Activated CD4-positive, alpha-beta T cell treated with anti-CD3 and anti-CD28 coated beads for 36 hours (primary cell): ENCODE measurements at regions of chr4 and their contacts with region 1.

Region 1: DNA sequence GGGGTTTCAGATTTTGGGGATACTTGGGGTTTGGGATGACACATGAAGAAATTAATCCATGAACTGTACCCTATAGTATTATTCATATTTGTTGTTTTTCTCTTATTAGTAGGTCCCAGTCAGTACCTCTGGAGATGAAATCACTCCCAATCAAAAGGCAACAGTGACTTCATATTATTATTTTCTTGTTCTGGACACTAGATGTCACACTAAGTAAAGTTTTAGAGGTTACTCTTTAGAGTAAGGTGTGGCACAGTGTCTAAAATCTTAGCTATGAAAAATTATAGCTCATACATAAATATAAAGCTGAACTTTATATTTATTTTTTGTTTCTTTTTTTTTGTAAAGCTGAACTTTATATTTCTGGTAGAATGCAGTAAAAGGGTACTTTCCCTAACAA is 35.1 kb downstream of the FAM114A1 start:
- DNase-seq: no peak
- ATAC-seq: peak; percentile 88
- H3K4me3 Mint-ChIP-seq: no peak overlapping the region
- H3K27ac Mint-ChIP-seq: no peak overlapping the region
- H3K4me1 Mint-ChIP-seq: peaks cover 3% of the 10 kb centered on the region
- H3K27me3 Mint-ChIP-seq: no peaks in the 10 kb centered on the region

Region 2: DNA sequence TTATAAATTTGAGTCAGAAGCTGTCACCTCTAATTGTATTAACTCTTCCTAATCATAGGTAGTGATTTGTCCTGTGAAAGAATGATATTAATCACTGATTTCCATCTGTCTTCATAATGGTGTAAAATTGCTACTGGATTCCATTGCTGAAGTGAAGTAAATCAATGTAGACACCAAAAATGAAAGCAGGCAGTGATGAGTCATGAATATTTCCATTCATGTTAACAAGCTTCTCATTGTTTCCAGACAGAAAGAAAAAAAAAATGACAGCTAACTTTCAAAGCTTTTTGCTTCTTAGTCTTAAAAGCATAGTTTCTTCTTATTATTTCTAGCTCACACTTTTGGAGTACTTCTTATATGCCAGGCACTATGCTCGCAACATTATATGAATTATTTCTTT is 13.6 kb before region 1 on chr4:
- CTCF ChIA-PET with region 1: interaction called, 16 read pairs
- POLR2A ChIA-PET with region 1: no interaction called
- intact Hi-C with region 1: no loop called
- DNase-seq: no peak
- ATAC-seq: peak; percentile 78
- H3K4me3 Mint-ChIP-seq: peak overlapping the region; percentile 52
- H3K27ac Mint-ChIP-seq: peak overlapping the region; percentile 88
- H3K4me1 Mint-ChIP-seq: peaks cover 18% of the 10 kb centered on the region
- H3K27me3 Mint-ChIP-seq: no peaks in the 10 kb centered on the region

Region 3: DNA sequence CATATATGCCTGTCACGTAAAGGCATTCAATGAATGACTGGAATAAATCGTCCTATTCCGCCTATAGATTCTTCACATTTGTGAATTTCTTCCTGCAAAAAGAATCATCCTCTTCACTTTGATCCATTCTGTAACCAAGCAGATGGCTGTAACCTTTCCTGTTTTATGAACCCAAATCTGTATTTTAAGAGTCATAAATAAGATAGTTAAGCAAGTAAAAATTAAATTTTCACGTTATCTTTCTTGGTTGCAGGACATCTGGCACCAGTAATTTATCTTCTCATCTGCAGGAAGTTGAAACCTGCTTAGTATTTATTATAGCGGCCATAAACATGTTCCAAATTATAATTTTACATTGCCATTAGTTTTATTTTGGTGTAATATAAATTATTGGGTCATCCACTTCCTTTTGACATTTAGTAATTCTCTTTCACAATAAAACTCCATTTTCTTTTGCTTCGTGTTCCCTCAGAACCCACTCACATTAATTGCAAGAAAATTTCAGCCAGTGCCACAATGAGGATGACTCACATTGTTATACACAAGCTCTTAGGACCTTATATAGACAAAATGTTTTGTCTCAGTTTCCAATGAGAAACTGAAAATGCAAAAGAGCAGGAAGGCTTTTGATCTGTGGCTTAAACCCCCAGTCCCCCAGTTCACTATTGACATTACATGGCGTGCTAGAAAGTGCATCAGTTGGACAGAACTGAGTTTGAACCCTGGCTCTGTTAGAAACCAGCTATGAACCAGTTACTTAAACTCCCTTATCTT is 78.4 kb after region 1 on chr4:
- CTCF ChIA-PET with region 1: interaction called, 18 read pairs
- POLR2A ChIA-PET with region 1: no interaction called
- intact Hi-C with region 1: loop called in 1 of 2 experiments (anchors 5 kb)
- DNase-seq: peak; percentile 30
- ATAC-seq: peak; percentile 81
- H3K4me3 Mint-ChIP-seq: peak overlapping the region; percentile 23
- H3K27ac Mint-ChIP-seq: peak overlapping the region; percentile 84
- H3K4me1 Mint-ChIP-seq: peaks cover 62% of the 10 kb centered on the region
- H3K27me3 Mint-ChIP-seq: no peaks in the 10 kb centered on the region

Region 4: DNA sequence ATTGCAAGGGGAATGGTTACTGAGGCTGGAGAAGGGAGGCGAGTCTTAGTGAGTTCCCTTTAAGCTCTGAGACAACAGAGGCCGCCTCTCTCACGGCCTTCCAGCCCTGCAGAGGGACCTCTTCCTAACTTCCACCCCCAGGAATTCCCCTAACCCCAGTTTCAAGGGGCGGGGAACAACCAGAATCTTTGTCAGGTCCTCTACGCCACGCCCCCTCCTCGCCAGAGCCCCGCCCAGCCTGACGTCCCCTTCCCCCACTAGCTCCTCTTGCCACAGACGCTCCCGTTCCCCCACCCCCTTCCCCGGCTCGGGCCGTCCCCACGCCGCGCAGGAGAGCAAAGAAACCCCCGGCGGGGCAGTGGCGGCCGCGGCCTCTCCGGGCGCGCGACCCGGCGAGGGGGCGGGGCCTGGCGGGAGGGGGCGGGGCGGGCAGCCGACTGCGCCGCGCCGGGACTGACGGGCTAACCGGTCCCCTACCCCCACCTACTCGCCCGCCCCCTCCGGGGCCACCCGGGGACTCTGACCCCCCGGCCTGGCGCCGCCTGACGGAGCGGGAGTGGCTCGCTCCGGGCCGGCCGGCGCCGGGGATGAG is 141.8 kb after region 1 on chr4:
- CTCF ChIA-PET with region 1: interaction called, 5 read pairs
- POLR2A ChIA-PET with region 1: interaction called, 5 read pairs
- intact Hi-C with region 1: loop called in 1 of 2 experiments (anchors 5 kb)
- DNase-seq: peak; percentile 99
- ATAC-seq: peak; percentile 87
- H3K4me3 Mint-ChIP-seq: peak overlapping the region; percentile 76
- H3K27ac Mint-ChIP-seq: peak overlapping the region; percentile 69
- H3K4me1 Mint-ChIP-seq: peaks cover 48% of the 10 kb centered on the region
- H3K27me3 Mint-ChIP-seq: no peaks in the 10 kb centered on the region

Region 5: GRCh38 chr4:39083164-39083563 is 180.5 kb after region 1 on chr4:
- CTCF ChIA-PET with region 1: interaction called, 11 read pairs
- POLR2A ChIA-PET with region 1: no interaction called
- intact Hi-C with region 1: no loop called
- DNase-seq: no peak
- ATAC-seq: no peak
- H3K4me3 Mint-ChIP-seq: no peak overlapping the region
- H3K27ac Mint-ChIP-seq: no peak overlapping the region
- H3K4me1 Mint-ChIP-seq: no peaks in the 10 kb centered on the region
- H3K27me3 Mint-ChIP-seq: no peaks in the 10 kb centered on the region

Region 6: DNA sequence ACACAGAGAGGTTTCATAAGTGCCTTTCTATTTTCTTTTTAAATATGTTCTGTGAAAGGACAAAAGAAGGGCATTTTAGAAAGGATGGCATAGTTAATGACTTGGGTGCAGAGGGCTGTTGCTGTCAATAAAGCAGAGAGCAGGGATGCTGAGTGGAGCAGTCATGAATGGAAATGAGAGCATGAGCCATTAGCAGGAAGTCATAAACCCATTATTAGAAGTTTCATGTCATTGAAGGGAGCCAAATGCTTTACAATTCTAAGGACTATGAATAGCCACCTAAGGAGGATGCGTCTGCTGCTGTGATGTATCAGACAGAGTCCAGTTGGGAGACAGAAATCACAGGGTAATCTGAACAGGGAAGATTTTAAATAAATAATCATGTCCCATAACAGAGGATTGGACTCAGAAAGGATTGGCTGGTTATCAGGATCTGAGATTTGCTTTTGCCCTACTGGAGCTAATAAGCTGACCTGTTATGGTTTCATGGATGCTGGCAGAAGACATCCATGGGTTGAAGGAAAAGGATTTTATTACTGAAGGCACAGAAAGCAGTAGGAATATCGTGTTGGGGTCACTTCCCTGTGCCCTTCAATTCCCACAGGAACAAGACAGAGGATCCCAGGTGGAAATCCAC is 232.1 kb after region 1 on chr4:
- CTCF ChIA-PET with region 1: interaction called, 121 read pairs
- POLR2A ChIA-PET with region 1: interaction called, 3 read pairs
- intact Hi-C with region 1: loop called (anchors 1 kb)
- DNase-seq: no peak
- ATAC-seq: no peak
- H3K4me3 Mint-ChIP-seq: no peak overlapping the region
- H3K27ac Mint-ChIP-seq: no peak overlapping the region
- H3K4me1 Mint-ChIP-seq: peaks cover 9% of the 10 kb centered on the region
- H3K27me3 Mint-ChIP-seq: no peaks in the 10 kb centered on the region

Region 7: DNA sequence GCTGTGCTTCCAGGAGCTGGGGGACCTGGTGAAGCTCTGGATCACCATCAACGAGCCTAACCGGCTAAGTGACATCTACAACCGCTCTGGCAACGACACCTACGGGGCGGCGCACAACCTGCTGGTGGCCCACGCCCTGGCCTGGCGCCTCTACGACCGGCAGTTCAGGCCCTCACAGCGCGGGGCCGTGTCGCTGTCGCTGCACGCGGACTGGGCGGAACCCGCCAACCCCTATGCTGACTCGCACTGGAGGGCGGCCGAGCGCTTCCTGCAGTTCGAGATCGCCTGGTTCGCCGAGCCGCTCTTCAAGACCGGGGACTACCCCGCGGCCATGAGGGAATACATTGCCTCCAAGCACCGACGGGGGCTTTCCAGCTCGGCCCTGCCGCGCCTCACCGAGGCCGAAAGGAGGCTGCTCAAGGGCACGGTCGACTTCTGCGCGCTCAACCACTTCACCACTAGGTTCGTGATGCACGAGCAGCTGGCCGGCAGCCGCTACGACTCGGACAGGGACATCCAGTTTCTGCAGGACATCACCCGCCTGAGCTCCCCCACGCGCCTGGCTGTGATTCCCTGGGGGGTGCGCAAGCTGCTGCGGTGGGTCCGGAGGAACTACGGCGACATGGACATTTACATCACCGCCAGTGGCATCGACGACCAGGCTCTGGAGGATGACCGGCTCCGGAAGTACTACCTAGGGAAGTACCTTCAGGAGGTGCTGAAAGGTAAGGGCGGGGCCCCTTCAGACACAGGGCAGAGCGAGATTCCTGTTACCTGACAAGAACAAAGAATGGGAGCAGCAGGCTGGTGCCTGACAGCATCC is 544.3 kb after region 1 on chr4:
- CTCF ChIA-PET with region 1: no interaction called
- POLR2A ChIA-PET with region 1: no interaction called
- intact Hi-C with region 1: loop called in 1 of 2 experiments (anchors 10 kb)
- DNase-seq: peak; percentile 76
- ATAC-seq: peak; percentile 81
- H3K4me3 Mint-ChIP-seq: peak overlapping the region; percentile 21
- H3K27ac Mint-ChIP-seq: no peak overlapping the region
- H3K4me1 Mint-ChIP-seq: peaks cover 25% of the 10 kb centered on the region
- H3K27me3 Mint-ChIP-seq: no peaks in the 10 kb centered on the region